Natural killer cell (primary cell): ENCODE measurements at regions of chr16 and their contacts with region 1.

Region 1: DNA sequence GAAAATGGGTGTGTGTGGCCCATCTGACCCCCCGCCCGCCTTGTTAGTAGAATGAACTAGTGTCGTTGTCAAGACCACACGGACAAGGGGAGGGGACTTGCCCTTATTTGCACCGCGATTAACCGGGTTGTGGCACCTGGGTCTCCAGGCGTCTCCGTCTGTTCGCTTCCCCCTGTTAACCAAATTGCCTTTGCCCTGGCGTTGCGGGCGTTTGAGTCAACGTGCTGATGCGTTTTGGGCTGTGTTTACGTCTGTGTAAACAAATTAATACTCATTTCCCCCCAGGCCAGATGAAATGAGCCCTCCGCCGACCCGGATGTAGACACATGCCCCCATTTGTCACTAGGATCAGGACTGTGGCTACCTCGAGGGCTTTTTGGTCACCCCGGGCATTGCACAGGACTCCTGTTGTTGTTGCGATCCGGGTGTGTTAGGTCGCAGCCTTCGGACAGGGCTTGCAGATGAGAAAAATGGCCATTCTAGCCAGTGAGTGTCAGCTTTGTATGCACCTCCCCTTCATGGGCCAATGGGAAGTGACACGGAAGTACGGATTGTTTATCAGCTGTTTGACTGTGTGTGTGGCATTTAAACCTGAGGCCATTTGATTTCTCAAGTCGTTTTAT is 906 bp downstream of the RBL2 start:
- DNase-seq: peak; percentile 71 to 87
- ATAC-seq: peak; percentile 74 to 88 (median 78)
- H3K4me3 ChIP-seq: peak overlapping the region; percentile 88
- H3K4me3 Mint-ChIP-seq: peak overlapping the region; percentile 93
- H3K27ac ChIP-seq: peak overlapping the region; percentile 94
- H3K27ac Mint-ChIP-seq: peak overlapping the region; percentile 97 to 98
- H3K4me1 ChIP-seq: peaks cover 18% of the 10 kb centered on the region
- H3K4me1 Mint-ChIP-seq: peaks cover 25 to 34% of the 10 kb centered on the region in 2 donors
- H3K27me3 ChIP-seq: no peaks in the 10 kb centered on the region
- H3K27me3 Mint-ChIP-seq: no peaks in the 10 kb centered on the region
- CTCF ChIP-seq: no peak

Region 2: DNA sequence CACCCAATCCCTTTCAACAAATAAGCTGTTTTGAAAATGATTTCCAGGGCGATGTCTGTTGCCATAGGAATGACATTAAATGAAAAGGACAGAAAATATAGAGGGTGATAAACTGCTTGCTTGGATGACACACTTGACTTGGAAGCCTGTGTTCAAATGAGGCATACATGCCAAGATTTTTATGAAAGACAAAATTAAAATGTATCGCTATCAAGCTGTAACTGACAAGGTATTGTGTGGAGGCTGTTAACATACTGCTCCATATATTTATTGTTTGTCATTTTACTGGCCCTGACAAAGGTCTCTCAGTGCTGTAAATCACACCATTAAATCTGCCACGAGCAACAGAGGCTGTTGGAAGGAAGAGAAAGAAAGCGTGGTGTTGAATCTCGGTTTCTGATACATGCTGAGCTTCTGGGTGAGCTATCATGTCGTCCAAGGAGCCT is 1828.0 kb before region 1 on chr16:
- intact Hi-C with region 1: no loop called
- DNase-seq: no peak
- ATAC-seq: no peak
- H3K4me3 ChIP-seq: no peak overlapping the region
- H3K4me3 Mint-ChIP-seq: no peak overlapping the region
- H3K27ac ChIP-seq: no peak overlapping the region
- H3K27ac Mint-ChIP-seq: no peak overlapping the region
- H3K4me1 ChIP-seq: no peaks in the 10 kb centered on the region
- H3K4me1 Mint-ChIP-seq: no peaks in the 10 kb centered on the region
- H3K27me3 ChIP-seq: no peaks in the 10 kb centered on the region
- H3K27me3 Mint-ChIP-seq: no peaks in the 10 kb centered on the region
- CTCF ChIP-seq: no peak

Region 3: GRCh38 chr16:53309457-53309856 is 125.7 kb before region 1 on chr16:
- intact Hi-C with region 1: no loop called
- DNase-seq: no peak
- ATAC-seq: no peak
- H3K4me3 ChIP-seq: no peak overlapping the region
- H3K4me3 Mint-ChIP-seq: no peak overlapping the region
- H3K27ac ChIP-seq: no peak overlapping the region
- H3K27ac Mint-ChIP-seq: no peak overlapping the region
- H3K4me1 ChIP-seq: no peaks in the 10 kb centered on the region
- H3K4me1 Mint-ChIP-seq: peaks cover 0 to 4% of the 10 kb centered on the region in 2 donors
- H3K27me3 ChIP-seq: no peaks in the 10 kb centered on the region
- H3K27me3 Mint-ChIP-seq: no peaks in the 10 kb centered on the region
- CTCF ChIP-seq: no peak

Region 4: GRCh38 chr16:53445534-53445933 is 10.4 kb after region 1 on chr16:
- intact Hi-C with region 1: loop called (anchors 1 kb)
- DNase-seq: peak in 1 of 2 donors; percentile 28
- ATAC-seq: peak; percentile 85 to 91 (median 91)
- H3K4me3 ChIP-seq: peak overlapping the region; percentile 28
- H3K4me3 Mint-ChIP-seq: peak overlapping the region; percentile 72
- H3K27ac ChIP-seq: peak overlapping the region; percentile 65
- H3K27ac Mint-ChIP-seq: peak overlapping the region; percentile 75 to 86
- H3K4me1 ChIP-seq: peaks cover 21% of the 10 kb centered on the region
- H3K4me1 Mint-ChIP-seq: peaks cover 24 to 32% of the 10 kb centered on the region in 2 donors
- H3K27me3 ChIP-seq: no peaks in the 10 kb centered on the region
- H3K27me3 Mint-ChIP-seq: no peaks in the 10 kb centered on the region
- CTCF ChIP-seq: no peak

Region 5: GRCh38 chr16:53495325-53495724 is 60.1 kb after region 1 on chr16:
- intact Hi-C with region 1: no loop called
- DNase-seq: no peak
- ATAC-seq: no peak
- H3K4me3 ChIP-seq: no peak overlapping the region
- H3K4me3 Mint-ChIP-seq: no peak overlapping the region
- H3K27ac ChIP-seq: no peak overlapping the region
- H3K27ac Mint-ChIP-seq: peak overlapping the region; percentile 16 to 50
- H3K4me1 ChIP-seq: no peaks in the 10 kb centered on the region
- H3K4me1 Mint-ChIP-seq: peaks cover 16 to 19% of the 10 kb centered on the region in 2 donors
- H3K27me3 ChIP-seq: no peaks in the 10 kb centered on the region
- H3K27me3 Mint-ChIP-seq: no peaks in the 10 kb centered on the region
- CTCF ChIP-seq: no peak